CD4-positive, alpha-beta T cell (primary cell): ENCODE measurements at regions of chr10 and their contacts with region 1.

Region 1: GRCh38 chr10:91163269-91163868 is 57.1 kb upstream of the PCGF5 start:
- DNase-seq: peak; percentile 61 to 94 (median 76)
- ATAC-seq: peak; percentile 71
- H3K4me3 ChIP-seq: peak overlapping the region; percentile 82
- H3K4me3 Mint-ChIP-seq: peak overlapping the region; percentile 98
- H3K27ac ChIP-seq: peak overlapping the region; percentile 79 to 87
- H3K27ac Mint-ChIP-seq: peak overlapping the region; percentile 98
- H3K4me1 ChIP-seq: peaks cover 19% of the 10 kb centered on the region
- H3K4me1 Mint-ChIP-seq: peaks cover 56% of the 10 kb centered on the region
- H3K27me3 ChIP-seq: no peaks in the 10 kb centered on the region
- H3K27me3 Mint-ChIP-seq: no peaks in the 10 kb centered on the region
- CTCF ChIP-seq: no peak

Region 2: GRCh38 chr10:89929282-89930026 is 1233.9 kb before region 1 on chr10:
- CTCF ChIA-PET with region 1: no interaction called
- POLR2A ChIA-PET with region 1: no interaction called
- intact Hi-C with region 1: no loop called
- DNase-seq: no peak
- ATAC-seq: no peak
- H3K4me3 ChIP-seq: no peak overlapping the region
- H3K4me3 Mint-ChIP-seq: no peak overlapping the region
- H3K27ac ChIP-seq: no peak overlapping the region
- H3K27ac Mint-ChIP-seq: no peak overlapping the region
- H3K4me1 ChIP-seq: no peaks in the 10 kb centered on the region
- H3K4me1 Mint-ChIP-seq: no peaks in the 10 kb centered on the region
- H3K27me3 ChIP-seq: no peaks in the 10 kb centered on the region
- H3K27me3 Mint-ChIP-seq: no peaks in the 10 kb centered on the region
- CTCF ChIP-seq: no peak

Region 3: GRCh38 chr10:91006001-91006751 is 157.2 kb before region 1 on chr10:
- CTCF ChIA-PET with region 1: no interaction called
- POLR2A ChIA-PET with region 1: interaction called, 10 read pairs
- intact Hi-C with region 1: no loop called
- DNase-seq: peak; percentile 34 to 84 (median 55)
- ATAC-seq: peak; percentile 92
- H3K4me3 ChIP-seq: no peak overlapping the region
- H3K4me3 Mint-ChIP-seq: peak overlapping the region; percentile 47
- H3K27ac ChIP-seq: no peak overlapping the region
- H3K27ac Mint-ChIP-seq: peak overlapping the region; percentile 13
- H3K4me1 ChIP-seq: peaks cover 8% of the 10 kb centered on the region
- H3K4me1 Mint-ChIP-seq: peaks cover 12% of the 10 kb centered on the region
- H3K27me3 ChIP-seq: no peaks in the 10 kb centered on the region
- H3K27me3 Mint-ChIP-seq: no peaks in the 10 kb centered on the region
- CTCF ChIP-seq: peak; percentile 92

Region 4: DNA sequence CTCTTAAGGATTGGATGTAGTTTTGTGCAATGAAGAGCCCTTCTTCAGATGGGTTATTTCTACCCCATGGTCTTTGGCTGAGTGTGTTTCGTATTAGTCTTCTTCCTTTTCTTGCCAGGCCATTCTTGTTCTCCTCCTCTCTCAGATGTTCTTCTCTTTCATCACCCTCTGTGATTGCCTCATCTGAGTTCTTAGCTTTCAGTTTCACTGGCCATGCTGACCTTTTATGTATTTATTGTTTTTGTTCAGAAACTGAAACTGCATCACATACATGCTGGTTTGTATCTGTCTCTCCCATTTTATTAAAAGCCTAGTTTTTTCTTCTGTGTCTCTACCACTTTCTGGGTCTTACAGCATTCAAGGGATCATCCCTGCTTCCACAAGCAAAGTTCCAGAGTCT is 35.4 kb after region 1 on chr10:
- CTCF ChIA-PET with region 1: no interaction called
- POLR2A ChIA-PET with region 1: interaction called, 45 read pairs
- intact Hi-C with region 1: loop called in 1 of 2 experiments (anchors 2 kb)
- DNase-seq: peak in 3 of 14 experiments; percentile 58 to 81 (median 61)
- ATAC-seq: peak; percentile 24
- H3K4me3 ChIP-seq: no peak overlapping the region
- H3K4me3 Mint-ChIP-seq: peak overlapping the region; percentile 6
- H3K27ac ChIP-seq: peak overlapping the region in 1 of 2 donors; percentile 71
- H3K27ac Mint-ChIP-seq: peak overlapping the region; percentile 74
- H3K4me1 ChIP-seq: peaks cover 43% of the 10 kb centered on the region
- H3K4me1 Mint-ChIP-seq: peaks cover 84% of the 10 kb centered on the region
- H3K27me3 ChIP-seq: no peaks in the 10 kb centered on the region
- H3K27me3 Mint-ChIP-seq: no peaks in the 10 kb centered on the region
- CTCF ChIP-seq: no peak

Region 5: GRCh38 chr10:91251430-91252056 is 88.2 kb after region 1 on chr10:
- CTCF ChIA-PET with region 1: interaction called, 4 read pairs
- POLR2A ChIA-PET with region 1: interaction called, 15 read pairs
- intact Hi-C with region 1: no loop called
- DNase-seq: peak; percentile 26 to 82 (median 36)
- ATAC-seq: peak; percentile 90
- H3K4me3 ChIP-seq: no peak overlapping the region
- H3K4me3 Mint-ChIP-seq: no peak overlapping the region
- H3K27ac ChIP-seq: no peak overlapping the region
- H3K27ac Mint-ChIP-seq: no peak overlapping the region
- H3K4me1 ChIP-seq: peaks cover 6% of the 10 kb centered on the region
- H3K4me1 Mint-ChIP-seq: no peaks in the 10 kb centered on the region
- H3K27me3 ChIP-seq: no peaks in the 10 kb centered on the region
- H3K27me3 Mint-ChIP-seq: no peaks in the 10 kb centered on the region
- CTCF ChIP-seq: peak; percentile 99

Region 6: DNA sequence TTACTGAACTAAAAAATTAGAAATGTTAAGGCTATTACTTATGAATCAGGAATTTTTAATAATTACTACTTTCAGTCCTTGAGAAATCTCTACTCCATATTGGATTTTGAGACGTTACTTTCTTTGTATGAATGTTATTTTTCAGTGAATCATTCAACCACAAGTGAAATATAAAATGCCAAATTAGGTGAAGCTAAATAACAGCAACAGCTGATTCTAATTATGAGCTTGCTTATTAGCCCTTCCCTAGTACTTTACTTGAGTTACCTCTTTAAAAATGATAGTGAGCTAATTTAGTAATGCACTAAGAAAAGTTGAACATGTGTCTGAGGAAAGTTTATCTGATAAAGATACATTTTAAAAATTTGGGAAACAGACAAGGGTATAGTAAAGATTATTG is 108.5 kb after region 1 on chr10:
- CTCF ChIA-PET with region 1: no interaction called
- POLR2A ChIA-PET with region 1: no interaction called
- intact Hi-C with region 1: no loop called
- DNase-seq: no peak
- ATAC-seq: no peak
- H3K4me3 ChIP-seq: no peak overlapping the region
- H3K4me3 Mint-ChIP-seq: no peak overlapping the region
- H3K27ac ChIP-seq: no peak overlapping the region
- H3K27ac Mint-ChIP-seq: no peak overlapping the region
- H3K4me1 ChIP-seq: no peaks in the 10 kb centered on the region
- H3K4me1 Mint-ChIP-seq: no peaks in the 10 kb centered on the region
- H3K27me3 ChIP-seq: no peaks in the 10 kb centered on the region
- H3K27me3 Mint-ChIP-seq: no peaks in the 10 kb centered on the region
- CTCF ChIP-seq: no peak

Region 7: GRCh38 chr10:91923371-91924211 is 760.2 kb after region 1 on chr10 and contains the start of gene BTAF1:
- CTCF ChIA-PET with region 1: interaction called, 4 read pairs
- POLR2A ChIA-PET with region 1: interaction called, 5 read pairs
- intact Hi-C with region 1: loop called in 1 of 2 experiments (anchors 10 kb)
- DNase-seq: peak; percentile 84 to 98 (median 90)
- ATAC-seq: peak; percentile 93
- H3K4me3 ChIP-seq: peak within 1 kb of the TSS; percentile 86
- H3K4me3 Mint-ChIP-seq: peak within 1 kb of the TSS; percentile 98
- H3K27ac ChIP-seq: peak within 1 kb of the TSS; percentile 93 to 97
- H3K27ac Mint-ChIP-seq: peak within 1 kb of the TSS; percentile 98
- H3K4me1 ChIP-seq: peaks cover 20% of the 10 kb centered on the region
- H3K4me1 Mint-ChIP-seq: peaks cover 47% of the 10 kb centered on the region
- H3K27me3 ChIP-seq: peaks cover 4 to 6% of the 10 kb centered on the region in 2 experiments
- H3K27me3 Mint-ChIP-seq: peaks cover under 1% of the 10 kb centered on the region
- CTCF ChIP-seq: no peak
- total RNA-seq, gene BTAF1: 80.8 to 85.8 TPM